ENCODE measurements at regions of chr4 and their contacts with region 1.

Region 1: GRCh38 chr4:15882675-15883086 is 55.9 kb downstream of the FGFBP1 start:
- DNase-seq: peak in 1 of 2 donors; percentile 57
- ATAC-seq: peak; percentile 83 to 97 (median 87)
- H3K4me3 ChIP-seq: no peak overlapping the region
- H3K27ac ChIP-seq: no peak overlapping the region
- H3K4me1 ChIP-seq: peaks cover 5% of the 10 kb centered on the region
- H3K27me3 ChIP-seq: no peaks in the 10 kb centered on the region
- CTCF ChIP-seq: peak; percentile 88

Region 2: GRCh38 chr4:15956179-15956850 is 73.6 kb after region 1 on chr4:
- intact Hi-C with region 1: loop called (anchors 2 kb)
- DNase-seq: peak; percentile 72 to 83
- ATAC-seq: peak; percentile 92 to 99 (median 96)
- H3K4me3 ChIP-seq: no peak overlapping the region
- H3K27ac ChIP-seq: no peak overlapping the region
- H3K4me1 ChIP-seq: peaks cover 2% of the 10 kb centered on the region
- H3K27me3 ChIP-seq: no peaks in the 10 kb centered on the region
- CTCF ChIP-seq: peak; percentile 90

Region 3: DNA sequence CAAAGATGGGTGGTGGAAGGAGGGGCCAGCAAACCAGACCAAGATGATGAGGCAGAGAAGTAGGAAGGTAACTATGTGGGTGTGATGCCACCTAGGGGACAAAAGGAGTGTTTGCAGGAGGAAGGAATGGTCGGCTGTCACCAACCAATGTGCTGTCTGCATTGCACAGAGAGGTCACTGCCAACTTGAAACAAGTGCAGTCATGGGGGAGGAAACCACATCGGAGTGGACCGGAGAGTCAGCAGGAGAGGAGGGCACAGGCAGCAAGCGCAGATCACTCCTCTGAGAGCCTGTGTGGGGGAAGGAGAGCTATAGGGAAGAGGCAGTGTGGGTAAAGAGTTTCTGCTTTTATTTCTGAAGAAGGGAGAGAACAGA is 118.8 kb after region 1 on chr4:
- intact Hi-C with region 1: loop called (anchors 1 to 5 kb)
- DNase-seq: peak in 1 of 2 donors; percentile 29
- ATAC-seq: peak; percentile 91 to 100 (median 96)
- H3K4me3 ChIP-seq: no peak overlapping the region
- H3K27ac ChIP-seq: no peak overlapping the region
- H3K4me1 ChIP-seq: peaks cover 3% of the 10 kb centered on the region
- H3K27me3 ChIP-seq: no peaks in the 10 kb centered on the region
- CTCF ChIP-seq: peak; percentile 85

Region 4: DNA sequence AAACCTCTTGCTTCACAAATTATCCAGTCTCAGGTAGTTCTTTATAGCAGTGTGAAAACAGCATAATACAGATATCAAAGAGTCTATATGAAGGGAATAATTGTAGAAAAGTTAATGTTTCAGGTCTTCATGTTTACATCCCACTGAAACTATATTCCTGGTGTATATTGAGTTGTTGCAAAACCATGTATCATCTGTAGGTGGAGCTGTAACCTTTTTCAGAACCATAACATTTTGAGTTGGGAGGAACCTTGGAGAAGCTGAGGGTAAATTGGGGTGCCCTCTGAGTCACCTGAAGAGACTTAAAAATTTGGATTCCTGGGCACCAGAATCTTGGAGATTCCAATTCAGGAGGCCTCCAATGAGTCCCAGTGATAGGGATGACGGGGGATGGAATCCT is 395.5 kb after region 1 on chr4:
- intact Hi-C with region 1: no loop called
- DNase-seq: no peak
- ATAC-seq: no peak
- H3K4me3 ChIP-seq: no peak overlapping the region
- H3K27ac ChIP-seq: no peak overlapping the region
- H3K4me1 ChIP-seq: no peaks in the 10 kb centered on the region
- H3K27me3 ChIP-seq: no peaks in the 10 kb centered on the region
- CTCF ChIP-seq: no peak

Measured in psoas muscle (tissue), 8 donors.